Activated T-helper 2 cell treated with anti-CD3 and anti-CD28 coated beads, Interferon-gamma antibody, Interleukin-2, Interleukin-4, amounts not matched to agents 10 μg/mL and 5 μg/mL and 100 μg/mL, durations not matched to agents 14 hours and 24 hours and 36 hours (primary cell): ENCODE measurements at regions of chr16 and their contacts with region 1.

Region 1: GRCh38 chr16:15961060-15961511 is 11.7 kb downstream of the ABCC1 start:
- DNase-seq: peak; percentile 74
- H3K4me3 Mint-ChIP-seq: peak overlapping the region; percentile 73
- H3K27ac Mint-ChIP-seq: peak overlapping the region; percentile 98
- H3K4me1 Mint-ChIP-seq: peaks cover 68% of the 10 kb centered on the region
- H3K27me3 Mint-ChIP-seq: no peaks in the 10 kb centered on the region

Region 2: DNA sequence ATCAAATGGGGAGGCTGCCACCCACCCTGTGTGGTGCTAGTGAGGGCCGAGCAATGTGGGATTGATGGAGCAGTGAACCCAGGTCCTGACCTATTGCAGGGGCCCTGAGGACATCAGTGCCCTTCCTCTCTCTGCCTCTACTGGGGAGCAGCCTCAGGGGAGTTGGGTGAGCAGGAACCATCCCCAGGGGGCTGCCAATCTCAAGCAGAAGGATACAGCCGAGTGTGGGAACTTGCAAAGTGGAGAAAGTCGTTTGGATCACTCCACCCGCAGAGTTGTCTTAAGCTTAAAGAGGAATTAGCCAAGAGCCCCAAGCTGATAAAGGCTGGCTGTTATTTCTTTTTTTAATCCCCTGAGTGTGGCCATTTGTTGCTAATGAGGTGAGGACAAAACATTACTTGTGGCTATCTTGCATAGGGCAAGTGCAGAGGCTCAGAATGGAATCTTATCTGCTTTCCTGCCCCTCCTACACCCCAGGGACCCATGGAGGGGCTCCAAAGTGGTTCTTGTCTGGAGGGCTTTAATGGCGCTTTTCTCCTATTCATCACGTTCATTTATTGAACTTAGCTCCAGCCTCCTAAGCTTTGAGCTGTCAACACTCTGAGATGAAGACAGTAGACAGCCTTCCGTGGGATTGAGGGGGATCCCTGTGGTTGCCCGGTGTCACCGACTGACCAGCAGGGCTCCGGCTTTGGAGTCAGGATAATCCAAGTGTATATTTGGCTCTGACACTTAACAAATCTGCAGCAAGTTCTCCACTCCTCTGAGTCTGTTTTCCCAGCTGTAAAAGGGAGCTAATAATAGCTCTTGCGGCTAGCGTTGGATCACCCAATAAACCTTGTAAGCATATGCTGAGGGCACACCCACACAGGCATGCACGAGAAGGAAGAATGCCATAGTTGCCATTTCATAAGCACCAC is 149.3 kb before region 1 on chr16:
- intact Hi-C with region 1: no loop called
- DNase-seq: no peak
- H3K4me3 Mint-ChIP-seq: no peak overlapping the region
- H3K27ac Mint-ChIP-seq: no peak overlapping the region
- H3K4me1 Mint-ChIP-seq: no peaks in the 10 kb centered on the region
- H3K27me3 Mint-ChIP-seq: peaks cover 18% of the 10 kb centered on the region

Region 3: DNA sequence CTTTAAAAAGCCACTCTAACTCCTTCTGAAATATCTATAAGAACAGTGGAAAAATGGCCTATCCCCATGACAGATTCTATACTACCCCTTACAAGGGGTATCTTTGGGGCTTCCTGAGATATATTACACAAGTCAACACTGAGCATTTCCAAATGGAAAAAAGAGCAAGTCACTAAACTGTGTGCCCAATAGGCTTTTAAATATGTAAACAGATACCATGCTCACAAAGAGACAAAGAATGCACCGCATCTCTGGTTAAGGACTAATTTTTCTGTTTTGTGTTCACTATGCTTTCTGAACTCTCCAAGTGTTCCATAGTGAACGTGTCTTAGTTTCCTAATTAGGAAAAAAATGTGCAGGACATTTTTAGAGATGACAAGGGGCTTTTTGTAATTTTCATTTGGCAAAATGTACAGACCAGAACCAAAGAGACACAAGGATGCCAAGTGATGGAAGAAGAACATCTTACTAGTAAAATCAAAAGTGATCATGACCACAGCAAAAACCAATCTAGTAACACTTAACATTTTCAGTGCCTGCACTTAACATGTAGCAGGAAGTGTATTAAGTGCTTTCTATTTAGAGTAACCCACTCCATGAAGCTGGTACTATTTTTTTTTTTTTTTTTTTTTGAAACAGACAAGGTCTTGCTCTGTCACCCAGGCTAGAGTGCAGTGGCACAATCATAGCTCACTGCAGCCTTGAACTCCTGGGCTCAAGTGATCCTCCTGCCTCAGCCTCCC is 125.8 kb before region 1 on chr16:
- intact Hi-C with region 1: no loop called
- DNase-seq: no peak
- H3K4me3 Mint-ChIP-seq: no peak overlapping the region
- H3K27ac Mint-ChIP-seq: peak overlapping the region; percentile 14
- H3K4me1 Mint-ChIP-seq: peaks cover 9% of the 10 kb centered on the region
- H3K27me3 Mint-ChIP-seq: peaks cover 6% of the 10 kb centered on the region

Region 4: DNA sequence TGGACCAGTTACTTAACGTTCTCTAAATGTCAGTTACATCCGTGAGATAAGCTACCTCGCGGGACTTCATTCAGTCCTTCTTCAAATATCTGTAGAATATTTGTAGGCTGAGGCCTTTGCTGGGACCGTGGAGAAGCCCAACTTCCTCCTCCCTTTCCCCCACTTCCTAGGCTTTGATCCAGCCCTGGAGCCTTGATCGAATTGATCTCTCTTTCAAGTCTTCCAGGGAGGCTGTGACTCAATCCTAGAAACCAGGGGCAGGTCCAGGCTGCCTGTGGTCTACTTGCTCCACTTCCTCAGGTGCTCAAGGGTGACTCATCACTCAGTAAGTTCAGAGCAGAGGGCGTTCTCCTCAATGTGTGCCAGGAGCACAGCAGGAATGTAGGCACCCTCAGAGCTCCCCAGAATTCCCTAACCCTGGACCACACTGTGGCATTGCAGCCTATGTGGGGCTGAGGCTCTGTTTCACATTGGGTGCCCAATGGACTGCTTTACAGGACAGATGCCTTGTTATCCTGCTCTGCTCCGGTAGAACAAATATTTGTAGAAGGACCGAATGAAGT is 61.5 kb before region 1 on chr16:
- intact Hi-C with region 1: loop called (anchors 1 kb)
- DNase-seq: peak; percentile 52
- H3K4me3 Mint-ChIP-seq: no peak overlapping the region
- H3K27ac Mint-ChIP-seq: peak overlapping the region; percentile 70
- H3K4me1 Mint-ChIP-seq: peaks cover 35% of the 10 kb centered on the region
- H3K27me3 Mint-ChIP-seq: no peaks in the 10 kb centered on the region

Region 5: GRCh38 chr16:15928261-15929104 is 32.6 kb before region 1 on chr16:
- intact Hi-C with region 1: no loop called
- DNase-seq: no peak
- H3K4me3 Mint-ChIP-seq: no peak overlapping the region
- H3K27ac Mint-ChIP-seq: no peak overlapping the region
- H3K4me1 Mint-ChIP-seq: no peaks in the 10 kb centered on the region
- H3K27me3 Mint-ChIP-seq: peaks cover 5% of the 10 kb centered on the region

Region 6: DNA sequence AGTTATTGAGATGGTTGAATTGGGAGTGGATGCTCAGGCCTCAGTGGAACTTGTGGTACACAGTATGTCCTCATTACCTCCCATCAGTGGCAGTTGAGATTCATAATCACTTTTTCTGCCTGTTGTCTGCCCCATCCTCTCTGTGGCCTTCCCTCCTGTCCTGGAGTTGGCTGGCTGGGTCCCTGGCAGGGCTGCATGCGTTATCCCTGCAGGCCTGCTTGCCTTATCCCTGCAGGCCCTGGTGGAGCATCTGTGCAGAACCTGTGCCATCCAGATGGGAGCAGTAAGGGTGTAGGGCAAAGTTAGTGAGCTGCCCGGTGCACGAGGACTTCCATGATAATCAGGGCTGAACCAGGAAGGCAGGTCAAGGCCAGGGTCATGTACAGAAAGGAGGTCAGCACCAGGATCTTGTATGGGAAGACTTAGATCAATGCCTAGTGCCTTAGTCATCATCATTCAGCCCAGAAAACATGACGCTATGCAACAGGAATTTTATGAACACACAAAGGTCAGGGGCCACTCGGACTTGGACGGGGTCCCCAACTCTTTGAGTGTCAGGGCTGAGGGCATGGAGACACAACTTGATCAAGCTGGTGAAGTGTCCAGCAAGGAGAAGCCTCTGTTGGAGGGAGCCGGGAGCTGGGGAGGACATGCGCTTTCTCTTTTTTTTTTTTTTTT is 35.5 kb after region 1 on chr16:
- intact Hi-C with region 1: loop called (anchors 2 kb)
- DNase-seq: no peak
- H3K4me3 Mint-ChIP-seq: no peak overlapping the region
- H3K27ac Mint-ChIP-seq: peak overlapping the region; percentile 38
- H3K4me1 Mint-ChIP-seq: peaks cover 49% of the 10 kb centered on the region
- H3K27me3 Mint-ChIP-seq: no peaks in the 10 kb centered on the region